PC-9 (cell line): ENCODE measurements at regions of chr10 and their contacts with region 1.

Region 1: GRCh38 chr10:6401562-6402348 is 178.3 kb downstream of the PRKCQ start:
- DNase-seq: peak; percentile 72 to 77
- H3K4me3 ChIP-seq: peak overlapping the region; percentile 46; the same call in 1 of the 2 replicates
- H3K27ac ChIP-seq: peak overlapping the region; percentile 77
- H3K4me1 ChIP-seq: peaks cover 32% of the 10 kb centered on the region
- H3K27me3 ChIP-seq: no peaks in the 10 kb centered on the region
- CTCF ChIP-seq: peak; percentile 80

Region 2: GRCh38 chr10:5434017-5434753 is 967.6 kb before region 1 on chr10:
- CTCF ChIA-PET with region 1: no interaction called
- POLR2A ChIA-PET with region 1: no interaction called
- intact Hi-C with region 1: loop called (anchors 10 kb)
- DNase-seq: peak in 1 of 2 experiments; percentile 14
- H3K4me3 ChIP-seq: no peak overlapping the region
- H3K27ac ChIP-seq: peak overlapping the region; percentile 43
- H3K4me1 ChIP-seq: peaks cover 10% of the 10 kb centered on the region; the same call in 1 of the 2 replicates
- H3K27me3 ChIP-seq: no peaks in the 10 kb centered on the region
- CTCF ChIP-seq: peak; percentile 76

Region 3: DNA sequence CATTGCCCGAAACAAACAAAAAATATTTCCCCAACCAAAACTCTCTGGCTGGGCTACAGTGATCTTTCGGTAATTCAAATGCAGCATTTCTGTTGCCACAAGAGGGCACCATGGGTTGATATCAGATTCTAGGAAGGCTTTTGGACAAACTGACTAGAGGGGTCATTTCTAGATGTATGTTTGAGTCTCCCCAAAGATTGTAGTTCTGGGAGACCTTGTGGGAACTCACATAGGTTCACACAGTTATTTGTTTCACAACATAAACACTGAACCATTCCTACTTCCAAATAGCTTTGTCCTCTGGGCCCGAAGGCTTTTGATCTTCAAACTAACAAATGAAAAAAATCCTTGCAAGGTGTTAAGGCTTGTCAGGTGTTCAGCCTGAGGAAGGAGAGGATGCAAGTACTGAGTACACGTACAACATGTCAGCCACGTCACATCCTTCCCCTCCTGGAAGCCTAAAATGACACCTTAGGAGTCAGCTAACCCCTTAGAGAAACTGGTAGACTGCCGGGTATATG is 387.5 kb before region 1 on chr10:
- CTCF ChIA-PET with region 1: no interaction called
- POLR2A ChIA-PET with region 1: no interaction called
- intact Hi-C with region 1: loop called (anchors 2 kb)
- DNase-seq: peak in 1 of 2 experiments; percentile 40
- H3K4me3 ChIP-seq: no peak overlapping the region
- H3K27ac ChIP-seq: no peak overlapping the region
- H3K4me1 ChIP-seq: no peaks in the 10 kb centered on the region
- H3K27me3 ChIP-seq: no peaks in the 10 kb centered on the region
- CTCF ChIP-seq: peak; percentile 74

Region 4: GRCh38 chr10:6141296-6142151 is 260.2 kb before region 1 on chr10:
- CTCF ChIA-PET with region 1: interaction called, 3 read pairs
- POLR2A ChIA-PET with region 1: no interaction called
- intact Hi-C with region 1: loop called (anchors 1 kb)
- DNase-seq: peak; percentile 22 to 63
- H3K4me3 ChIP-seq: peak overlapping the region; percentile 55; the same call in 1 of the 2 replicates
- H3K27ac ChIP-seq: no peak overlapping the region
- H3K4me1 ChIP-seq: peaks cover 5% of the 10 kb centered on the region; the same call in 1 of the 2 replicates
- H3K27me3 ChIP-seq: no peaks in the 10 kb centered on the region; the same call in 1 of the 2 replicates
- CTCF ChIP-seq: no peak

Region 5: GRCh38 chr10:6239213-6239991 is 162.4 kb before region 1 on chr10:
- CTCF ChIA-PET with region 1: interaction called, 4 read pairs
- POLR2A ChIA-PET with region 1: no interaction called
- intact Hi-C with region 1: loop called (anchors 1 kb)
- DNase-seq: peak; percentile 84 to 94
- H3K4me3 ChIP-seq: no peak overlapping the region
- H3K27ac ChIP-seq: peak overlapping the region; percentile 60
- H3K4me1 ChIP-seq: peaks cover 9% of the 10 kb centered on the region
- H3K27me3 ChIP-seq: no peaks in the 10 kb centered on the region
- CTCF ChIP-seq: no peak

Region 6: GRCh38 chr10:6254201-6254600 is 147.6 kb before region 1 on chr10:
- CTCF ChIA-PET with region 1: no interaction called
- POLR2A ChIA-PET with region 1: no interaction called
- intact Hi-C with region 1: no loop called
- DNase-seq: no peak
- H3K4me3 ChIP-seq: no peak overlapping the region
- H3K27ac ChIP-seq: no peak overlapping the region
- H3K4me1 ChIP-seq: no peaks in the 10 kb centered on the region
- H3K27me3 ChIP-seq: no peaks in the 10 kb centered on the region
- CTCF ChIP-seq: no peak

Region 7: GRCh38 chr10:6267941-6268340 is 133.8 kb before region 1 on chr10:
- CTCF ChIA-PET with region 1: no interaction called
- POLR2A ChIA-PET with region 1: no interaction called
- intact Hi-C with region 1: no loop called
- DNase-seq: no peak
- H3K4me3 ChIP-seq: no peak overlapping the region
- H3K27ac ChIP-seq: no peak overlapping the region
- H3K4me1 ChIP-seq: no peaks in the 10 kb centered on the region
- H3K27me3 ChIP-seq: no peaks in the 10 kb centered on the region
- CTCF ChIP-seq: no peak

Region 8: DNA sequence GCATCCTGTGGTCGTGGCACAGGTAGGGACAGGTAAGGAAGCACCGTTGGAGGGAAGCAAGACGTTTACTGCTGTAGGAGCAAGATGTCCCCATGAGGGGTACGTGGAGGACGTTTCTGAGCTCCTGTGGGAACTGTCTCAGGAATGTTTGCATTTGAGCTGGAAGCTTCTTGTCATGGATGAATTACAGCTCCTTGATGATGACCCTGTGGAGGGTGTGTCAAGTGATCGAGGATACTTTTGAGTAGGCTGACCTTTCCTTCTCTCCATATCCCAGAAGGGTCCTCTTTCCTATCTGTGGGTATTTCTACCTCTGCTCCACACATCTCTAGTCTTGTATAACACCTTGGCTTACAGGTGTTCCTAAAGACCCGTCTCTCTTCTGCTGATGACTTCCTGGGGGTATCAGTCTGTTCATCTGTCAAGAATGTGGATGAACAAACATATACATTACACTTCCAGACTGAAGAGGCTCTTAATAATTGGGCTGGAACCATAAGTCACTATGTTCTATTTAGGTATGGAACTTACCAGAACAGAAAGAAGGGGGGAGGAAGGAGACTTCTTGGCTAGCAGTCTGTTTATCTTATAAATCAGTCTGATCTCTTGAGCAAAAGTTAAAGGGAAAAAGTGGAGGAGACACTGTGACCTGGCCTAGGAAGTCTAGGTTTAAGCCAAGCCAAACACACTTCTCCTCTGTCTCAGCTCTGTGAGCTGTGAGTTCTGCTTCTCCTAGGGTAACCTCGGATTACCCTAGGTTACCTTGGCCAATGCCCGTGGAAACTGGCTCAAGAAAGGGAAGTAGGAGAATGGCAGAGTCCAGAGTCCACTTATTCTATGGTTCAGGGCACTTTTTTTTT is 104.0 kb before region 1 on chr10:
- CTCF ChIA-PET with region 1: no interaction called
- POLR2A ChIA-PET with region 1: interaction called, 5 read pairs
- intact Hi-C with region 1: loop called (anchors 1 kb)
- DNase-seq: peak in 1 of 2 experiments; percentile 88
- H3K4me3 ChIP-seq: no peak overlapping the region
- H3K27ac ChIP-seq: peak overlapping the region; percentile 85
- H3K4me1 ChIP-seq: peaks cover 62% of the 10 kb centered on the region
- H3K27me3 ChIP-seq: no peaks in the 10 kb centered on the region
- CTCF ChIP-seq: no peak

Region 9: DNA sequence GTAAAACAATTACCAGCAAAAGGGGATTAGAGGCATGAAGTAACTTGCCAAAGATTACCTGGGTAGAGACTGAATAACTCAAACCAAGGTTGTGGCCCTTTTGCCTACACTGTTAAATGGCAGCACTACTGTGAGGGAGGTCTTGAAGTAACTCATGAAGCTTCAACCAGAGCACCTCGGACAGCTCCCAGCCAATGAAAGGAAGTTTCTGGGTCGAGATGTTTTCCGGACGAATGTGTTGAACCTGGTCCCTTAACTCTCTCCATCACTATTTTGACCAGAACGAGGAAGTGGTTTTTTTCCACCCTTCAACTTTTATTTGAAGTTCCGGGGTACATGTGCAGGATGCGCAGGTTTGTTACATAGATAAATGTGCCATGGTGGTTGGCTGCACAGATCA is 312.0 kb after region 1 on chr10:
- CTCF ChIA-PET with region 1: no interaction called
- POLR2A ChIA-PET with region 1: no interaction called
- intact Hi-C with region 1: no loop called
- DNase-seq: no peak
- H3K4me3 ChIP-seq: no peak overlapping the region
- H3K27ac ChIP-seq: no peak overlapping the region
- H3K4me1 ChIP-seq: no peaks in the 10 kb centered on the region
- H3K27me3 ChIP-seq: no peaks in the 10 kb centered on the region
- CTCF ChIP-seq: no peak